ENCODE measurements at regions of chr5 and their contacts with region 1.

Region 1: GRCh38 chr5:148730943-148731861 is 76.9 kb upstream of the HTR4 start:
- DNase-seq: peak; percentile 73
- H3K4me3 Mint-ChIP-seq: peak overlapping the region; percentile 47
- H3K27ac Mint-ChIP-seq: no peak overlapping the region
- H3K4me1 Mint-ChIP-seq: peaks cover 12% of the 10 kb centered on the region
- H3K27me3 Mint-ChIP-seq: peaks cover 1% of the 10 kb centered on the region

Region 2: DNA sequence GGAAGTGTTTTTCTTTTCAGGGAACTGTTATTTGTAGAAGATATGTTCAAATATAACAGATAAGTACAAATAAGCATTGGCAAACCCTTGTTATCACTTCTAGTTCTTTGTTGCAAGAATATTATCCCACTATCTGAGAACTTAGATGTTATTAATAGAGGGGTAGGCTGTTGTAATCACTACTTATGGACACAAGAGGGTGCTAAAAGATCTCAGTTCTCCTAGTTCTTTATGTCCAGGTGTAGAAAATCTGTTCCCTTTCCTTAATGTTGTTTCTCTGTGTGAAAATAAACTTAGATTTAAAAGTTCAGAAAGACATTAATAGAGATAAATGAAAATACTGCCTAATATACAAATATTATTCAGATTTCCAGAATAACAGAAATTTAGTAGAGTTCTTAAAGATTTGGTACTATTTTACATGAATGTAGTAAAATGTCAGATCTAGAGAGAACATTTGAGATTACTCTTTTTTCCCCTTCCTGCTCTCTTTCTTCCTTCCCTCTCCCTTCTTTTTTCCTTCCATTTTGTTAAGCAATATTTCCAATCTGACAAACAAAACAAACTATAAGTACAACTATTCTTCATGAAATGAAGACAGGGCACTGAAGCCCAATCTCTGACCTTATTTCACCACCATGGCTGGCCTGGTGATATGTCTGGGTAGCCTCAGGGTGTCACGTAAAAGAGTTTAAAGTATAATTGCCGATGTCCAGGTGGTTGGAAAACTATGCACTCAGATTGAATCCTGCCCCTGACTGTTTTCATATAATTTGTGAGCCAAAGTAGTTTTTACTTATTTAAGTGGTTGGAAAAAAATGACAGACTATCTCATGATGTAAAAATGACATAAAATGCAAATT is 781.3 kb before region 1 on chr5:
- CTCF ChIA-PET with region 1: interaction called, 4 read pairs
- POLR2A ChIA-PET with region 1: no interaction called
- intact Hi-C with region 1: loop called (anchors 1 kb)
- DNase-seq: no peak
- H3K4me3 Mint-ChIP-seq: no peak overlapping the region
- H3K27ac Mint-ChIP-seq: no peak overlapping the region
- H3K4me1 Mint-ChIP-seq: no peaks in the 10 kb centered on the region
- H3K27me3 Mint-ChIP-seq: peaks cover 2% of the 10 kb centered on the region

Region 3: GRCh38 chr5:148437249-148437648 is 294.0 kb before region 1 on chr5:
- CTCF ChIA-PET with region 1: interaction called, 263 read pairs
- POLR2A ChIA-PET with region 1: no interaction called
- intact Hi-C with region 1: no loop called
- DNase-seq: no peak
- H3K4me3 Mint-ChIP-seq: no peak overlapping the region
- H3K27ac Mint-ChIP-seq: peak overlapping the region; percentile 76
- H3K4me1 Mint-ChIP-seq: peaks cover 4% of the 10 kb centered on the region
- H3K27me3 Mint-ChIP-seq: no peaks in the 10 kb centered on the region

Region 4: DNA sequence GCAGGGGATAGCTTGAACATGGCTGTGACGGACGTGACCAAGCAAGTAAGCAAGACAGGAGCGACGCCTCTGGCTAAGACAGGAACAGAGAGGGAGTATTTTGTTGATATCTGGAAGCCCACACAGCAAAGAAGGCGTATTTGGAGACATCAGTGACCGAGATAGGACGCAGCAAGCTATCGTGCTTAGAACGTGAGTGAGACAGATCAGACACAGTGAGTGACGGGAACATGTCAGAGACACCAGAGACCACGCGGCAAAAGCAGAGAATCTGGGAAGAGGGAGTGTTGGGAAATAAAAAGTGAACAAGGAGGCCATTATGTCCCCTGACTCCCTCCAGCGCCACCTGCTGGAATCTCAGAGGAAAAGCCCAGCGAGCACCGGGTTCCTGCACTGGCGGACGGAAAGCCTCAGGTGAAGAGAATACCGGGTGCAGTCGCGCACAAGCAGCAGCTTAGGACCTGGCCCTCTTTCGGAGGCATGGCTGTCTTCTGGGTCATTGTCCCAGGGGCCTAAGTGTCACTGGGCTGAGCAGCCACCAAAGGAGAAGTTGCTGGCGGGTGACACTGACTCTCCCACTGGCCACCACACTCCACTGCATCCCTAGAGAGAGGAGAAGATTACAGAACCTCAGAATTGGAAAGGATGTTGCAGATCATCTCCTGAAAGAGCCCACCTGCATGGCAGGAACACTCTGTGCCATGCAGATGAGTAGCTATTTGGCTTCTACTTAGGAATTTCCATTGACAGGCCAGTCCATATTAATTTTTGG is 248.3 kb before region 1 on chr5:
- CTCF ChIA-PET with region 1: interaction called, 26 read pairs
- POLR2A ChIA-PET with region 1: no interaction called
- intact Hi-C with region 1: no loop called
- DNase-seq: peak; percentile 74
- H3K4me3 Mint-ChIP-seq: no peak overlapping the region
- H3K27ac Mint-ChIP-seq: no peak overlapping the region
- H3K4me1 Mint-ChIP-seq: peaks cover 3% of the 10 kb centered on the region
- H3K27me3 Mint-ChIP-seq: peaks cover 30% of the 10 kb centered on the region

Region 5: GRCh38 chr5:148558892-148559291 is 172.3 kb before region 1 on chr5:
- CTCF ChIA-PET with region 1: no interaction called
- POLR2A ChIA-PET with region 1: no interaction called
- intact Hi-C with region 1: no loop called
- DNase-seq: no peak
- H3K4me3 Mint-ChIP-seq: no peak overlapping the region
- H3K27ac Mint-ChIP-seq: no peak overlapping the region
- H3K4me1 Mint-ChIP-seq: no peaks in the 10 kb centered on the region
- H3K27me3 Mint-ChIP-seq: peaks cover 8% of the 10 kb centered on the region

Region 6: DNA sequence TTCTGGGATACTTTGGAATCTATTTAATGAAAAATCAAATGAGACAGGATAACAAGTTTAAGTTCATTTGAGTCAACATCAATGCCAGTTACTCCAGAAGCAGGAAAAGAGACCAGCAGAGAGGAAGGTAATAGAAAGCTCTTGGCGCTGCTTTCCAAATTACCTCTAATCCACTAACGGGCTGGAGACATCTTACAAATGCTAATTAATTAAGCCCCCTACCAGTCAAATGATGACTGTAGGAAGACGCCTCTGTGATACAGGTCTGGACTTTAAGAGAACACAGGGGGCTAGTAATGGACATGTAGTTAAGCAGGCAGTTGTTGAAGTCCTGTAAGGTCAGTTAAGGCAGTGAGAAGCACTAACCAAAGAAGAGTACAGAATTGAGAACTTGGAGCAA is 11.6 kb before region 1 on chr5:
- CTCF ChIA-PET with region 1: interaction called, 26 read pairs
- POLR2A ChIA-PET with region 1: interaction called, 4 read pairs
- intact Hi-C with region 1: no loop called
- DNase-seq: no peak
- H3K4me3 Mint-ChIP-seq: no peak overlapping the region
- H3K27ac Mint-ChIP-seq: no peak overlapping the region
- H3K4me1 Mint-ChIP-seq: peaks cover 3% of the 10 kb centered on the region
- H3K27me3 Mint-ChIP-seq: peaks cover 41% of the 10 kb centered on the region

Region 7: DNA sequence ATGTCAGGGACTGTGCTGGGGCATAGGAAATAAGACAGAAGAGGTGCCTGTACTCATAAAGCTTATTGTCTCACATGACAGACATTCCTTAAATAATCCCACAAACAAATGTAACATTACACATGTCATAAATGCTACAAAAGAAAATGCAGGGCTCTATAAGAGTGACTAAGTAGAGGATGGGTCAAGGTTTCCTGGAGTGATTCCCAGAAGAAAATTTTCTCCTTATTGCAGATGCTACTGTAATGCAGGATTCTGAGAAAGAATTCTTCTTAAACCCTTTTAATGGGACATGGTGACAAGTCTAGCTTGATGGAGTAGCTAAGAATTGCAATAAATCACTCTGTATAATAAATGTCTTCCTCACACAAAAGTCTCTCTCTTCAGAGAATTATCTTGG is 276.0 kb after region 1 on chr5:
- CTCF ChIA-PET with region 1: interaction called, 90 read pairs
- POLR2A ChIA-PET with region 1: no interaction called
- intact Hi-C with region 1: no loop called
- DNase-seq: no peak
- H3K4me3 Mint-ChIP-seq: no peak overlapping the region
- H3K27ac Mint-ChIP-seq: no peak overlapping the region
- H3K4me1 Mint-ChIP-seq: no peaks in the 10 kb centered on the region
- H3K27me3 Mint-ChIP-seq: no peaks in the 10 kb centered on the region

Measured in activated CD4-positive, alpha-beta memory T cell treated with anti-CD3 and anti-CD28 coated beads for 36 hours (primary cell).